Activated CD4-positive, alpha-beta memory T cell treated with anti-CD3 and anti-CD28 coated beads, Interleukin-2, amount 10 ng/mL, durations not matched to agents 7 days and 5 days (primary cell): ENCODE measurements at regions of chr20 and their contacts with region 1.

Region 1: GRCh38 chr20:3313683-3314065 is 74.7 kb upstream of the SLC4A11 start:
- DNase-seq: no peak
- H3K4me3 Mint-ChIP-seq: no peak overlapping the region
- H3K27ac Mint-ChIP-seq: no peak overlapping the region
- H3K4me1 Mint-ChIP-seq: no peaks in the 10 kb centered on the region
- H3K27me3 Mint-ChIP-seq: no peaks in the 10 kb centered on the region

Region 2: GRCh38 chr20:3218307-3218988 is 95.2 kb before region 1 on chr20:
- CTCF ChIA-PET with region 1: interaction called, 73 read pairs
- POLR2A ChIA-PET with region 1: interaction called, 3 read pairs
- DNase-seq: peak; percentile 79
- H3K4me3 Mint-ChIP-seq: no peak overlapping the region
- H3K27ac Mint-ChIP-seq: no peak overlapping the region
- H3K4me1 Mint-ChIP-seq: peaks cover 12% of the 10 kb centered on the region
- H3K27me3 Mint-ChIP-seq: no peaks in the 10 kb centered on the region

Region 3: DNA sequence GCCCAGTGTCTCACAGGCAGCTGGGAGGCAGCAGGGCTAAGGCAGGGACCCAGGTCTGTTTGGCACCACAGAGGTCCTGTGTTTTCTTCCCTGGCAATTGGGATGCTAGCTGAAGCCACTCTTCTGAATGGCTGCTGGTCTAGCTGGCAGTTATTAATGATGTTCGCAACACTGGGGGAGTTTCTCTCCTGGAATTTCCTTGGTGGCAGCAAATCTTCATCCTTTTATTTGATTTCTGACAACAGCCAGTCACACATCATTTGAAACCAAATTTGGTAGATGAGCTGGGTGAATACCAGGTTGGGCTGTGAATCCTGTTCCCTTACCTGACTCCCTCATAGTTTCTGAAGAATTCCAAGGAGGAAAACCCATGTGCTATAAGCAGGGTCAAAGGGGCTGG is 33.9 kb before region 1 on chr20:
- CTCF ChIA-PET with region 1: no interaction called
- POLR2A ChIA-PET with region 1: no interaction called
- DNase-seq: no peak
- H3K4me3 Mint-ChIP-seq: no peak overlapping the region
- H3K27ac Mint-ChIP-seq: no peak overlapping the region
- H3K4me1 Mint-ChIP-seq: no peaks in the 10 kb centered on the region
- H3K27me3 Mint-ChIP-seq: no peaks in the 10 kb centered on the region

Region 4: DNA sequence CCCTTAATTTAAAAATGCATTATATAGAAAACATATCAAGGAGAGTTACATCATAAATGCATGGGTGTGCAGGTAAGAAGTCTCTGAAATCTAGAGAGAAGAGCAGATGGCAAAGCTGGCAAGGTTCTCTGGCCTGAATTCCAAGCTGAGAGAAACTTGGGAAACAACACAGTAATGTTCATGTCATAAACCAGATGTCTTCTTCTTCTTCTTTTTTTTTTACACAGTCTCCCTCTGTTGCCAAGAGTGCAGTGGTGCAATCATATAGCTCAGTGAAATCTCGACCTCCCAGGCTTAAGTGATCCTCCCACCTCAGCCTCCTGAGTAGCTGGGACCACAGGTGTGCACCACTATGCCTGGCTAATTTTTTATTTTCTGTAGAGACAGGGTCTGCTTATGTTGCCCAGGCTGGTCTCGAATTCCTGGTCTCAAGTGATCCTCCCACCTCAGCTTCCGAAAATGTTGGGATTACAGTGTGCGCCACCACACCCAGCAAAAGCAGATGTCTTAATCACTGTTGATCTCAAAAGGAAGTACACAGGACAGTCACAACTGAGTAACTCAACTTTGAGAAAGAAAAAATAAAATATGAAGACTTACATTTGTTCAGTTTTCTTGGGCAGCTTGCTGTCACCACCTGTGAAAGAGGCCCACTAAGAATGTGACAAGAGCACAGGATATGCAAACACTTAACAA is 16.5 kb after region 1 on chr20:
- CTCF ChIA-PET with region 1: interaction called, 17 read pairs
- POLR2A ChIA-PET with region 1: no interaction called
- DNase-seq: no peak
- H3K4me3 Mint-ChIP-seq: no peak overlapping the region
- H3K27ac Mint-ChIP-seq: no peak overlapping the region
- H3K4me1 Mint-ChIP-seq: peaks cover 26% of the 10 kb centered on the region
- H3K27me3 Mint-ChIP-seq: no peaks in the 10 kb centered on the region

Region 5: DNA sequence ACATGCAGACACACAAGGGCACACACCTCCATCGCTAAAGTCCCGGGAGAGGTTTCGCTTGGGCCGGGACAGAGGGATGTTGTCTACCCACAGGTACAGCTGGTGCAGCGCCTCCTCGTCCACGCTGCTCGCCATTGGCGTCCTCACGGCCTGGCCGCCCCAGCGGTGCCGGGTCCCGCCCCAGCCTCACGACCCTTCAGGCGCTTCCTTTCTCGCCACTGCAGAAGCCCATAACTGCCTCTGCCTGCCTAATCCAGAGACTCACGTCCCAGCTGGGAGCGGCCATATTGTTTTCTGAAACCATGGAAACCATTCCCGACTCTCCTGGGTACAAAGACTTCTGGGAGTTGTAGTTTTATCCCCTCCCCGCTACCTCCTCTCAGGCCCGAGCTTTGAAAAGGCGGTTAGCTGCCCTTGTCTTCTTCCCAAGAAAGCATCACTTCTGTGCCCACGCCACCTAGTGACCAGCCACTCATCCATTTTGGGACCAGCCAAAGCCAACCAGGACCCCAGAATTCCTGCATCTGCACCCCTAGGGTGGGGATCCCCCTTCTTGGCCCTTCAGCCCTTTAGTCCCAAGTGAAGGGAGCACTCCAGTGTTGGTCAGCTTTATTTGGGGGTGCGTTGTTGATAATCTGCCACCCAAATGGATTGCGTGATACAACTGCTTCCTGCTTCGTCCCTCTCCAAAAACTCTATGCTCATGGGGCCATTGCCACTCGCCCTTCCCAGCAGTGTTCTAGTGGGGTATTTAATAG is 467.7 kb after region 1 on chr20 and contains the start of gene SPEF1:
- CTCF ChIA-PET with region 1: no interaction called
- POLR2A ChIA-PET with region 1: no interaction called
- DNase-seq: peak; percentile 51
- H3K4me3 Mint-ChIP-seq: peak within 1 kb of the TSS; percentile 30
- H3K27ac Mint-ChIP-seq: no peak within 1 kb of the TSS
- H3K4me1 Mint-ChIP-seq: peaks cover 59% of the 10 kb centered on the region
- H3K27me3 Mint-ChIP-seq: peaks cover 30% of the 10 kb centered on the region
- total RNA-seq, gene SPEF1: not detected